CD8-positive, alpha-beta T cell (primary cell): ENCODE measurements at regions of chr20 and their contacts with region 1.

Region 1: DNA sequence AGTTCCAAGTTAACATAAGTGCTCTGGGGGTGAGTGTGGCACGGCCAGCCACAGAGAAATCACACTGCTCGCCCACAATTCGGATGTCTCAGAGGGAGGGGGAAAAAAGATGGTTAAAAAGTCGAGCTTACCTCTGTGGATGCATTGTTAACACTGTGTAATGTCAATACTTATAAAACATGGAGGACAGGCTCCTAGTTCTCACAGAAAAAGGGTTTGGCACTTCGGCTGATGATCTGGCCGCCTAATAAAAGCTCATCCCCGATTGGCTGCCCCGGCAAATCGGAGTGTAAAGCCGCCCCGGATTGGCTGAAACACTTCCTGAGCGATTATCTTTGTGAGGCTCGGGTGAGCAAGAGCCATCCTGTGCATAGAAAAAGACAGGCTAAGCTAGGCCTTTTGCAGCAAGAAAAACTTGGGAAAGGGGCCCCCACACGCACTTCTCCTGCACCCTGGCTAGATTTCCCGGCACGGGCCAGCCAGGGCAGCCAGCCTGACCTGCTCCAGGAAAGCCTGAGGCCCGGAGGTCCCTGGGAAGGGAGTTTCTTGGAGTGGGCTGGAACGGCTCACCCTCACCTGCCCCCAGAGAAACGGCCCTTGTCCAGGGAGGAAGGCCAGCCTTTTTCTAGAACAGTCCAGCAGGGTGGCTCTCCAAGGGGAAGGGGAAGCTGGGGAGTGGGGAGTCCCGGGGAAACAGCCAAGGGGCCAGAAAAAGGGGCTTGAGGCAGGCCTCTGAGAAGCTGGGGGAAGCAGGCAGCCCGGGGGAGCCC is at the start of gene ZMYND8:
- DNase-seq: peak; percentile 90 to 100 (median 95)
- ATAC-seq: peak; percentile 90
- H3K4me3 ChIP-seq: peak within 1 kb of the TSS; percentile 53 to 55
- H3K4me3 Mint-ChIP-seq: peak within 1 kb of the TSS; percentile 82
- H3K27ac ChIP-seq: peak within 1 kb of the TSS; percentile 75 to 76
- H3K27ac Mint-ChIP-seq: peak within 1 kb of the TSS; percentile 100
- H3K4me1 ChIP-seq: peaks cover 70% of the 10 kb centered on the region
- H3K4me1 Mint-ChIP-seq: peaks cover 38% of the 10 kb centered on the region
- H3K27me3 ChIP-seq: no peaks in the 10 kb centered on the region
- H3K27me3 Mint-ChIP-seq: no peaks in the 10 kb centered on the region
- CTCF ChIP-seq: no peak
- total RNA-seq, gene ZMYND8: 23.2 to 27.0 TPM

Region 2: GRCh38 chr20:47317127-47317895 is 39.4 kb before region 1 on chr20:
- CTCF ChIA-PET with region 1: no interaction called
- POLR2A ChIA-PET with region 1: no interaction called
- intact Hi-C with region 1: loop called in 1 of 2 experiments (anchors 5 kb)
- DNase-seq: peak in 8 of 9 experiments; percentile 33 to 63 (median 50)
- ATAC-seq: peak; percentile 77
- H3K4me3 ChIP-seq: no peak overlapping the region
- H3K4me3 Mint-ChIP-seq: no peak overlapping the region
- H3K27ac ChIP-seq: peak overlapping the region in 1 of 2 experiments; percentile 54
- H3K27ac Mint-ChIP-seq: peak overlapping the region; percentile 78
- H3K4me1 ChIP-seq: peaks cover 43% of the 10 kb centered on the region
- H3K4me1 Mint-ChIP-seq: peaks cover 67% of the 10 kb centered on the region
- H3K27me3 ChIP-seq: no peaks in the 10 kb centered on the region
- H3K27me3 Mint-ChIP-seq: no peaks in the 10 kb centered on the region
- CTCF ChIP-seq: no peak

Region 3: GRCh38 chr20:47535088-47535487 is 178.4 kb after region 1 on chr20:
- CTCF ChIA-PET with region 1: no interaction called
- POLR2A ChIA-PET with region 1: no interaction called
- intact Hi-C with region 1: no loop called
- DNase-seq: no peak
- ATAC-seq: no peak
- H3K4me3 ChIP-seq: no peak overlapping the region
- H3K4me3 Mint-ChIP-seq: no peak overlapping the region
- H3K27ac ChIP-seq: no peak overlapping the region
- H3K27ac Mint-ChIP-seq: no peak overlapping the region
- H3K4me1 ChIP-seq: peaks cover 25% of the 10 kb centered on the region
- H3K4me1 Mint-ChIP-seq: peaks cover 59% of the 10 kb centered on the region
- H3K27me3 ChIP-seq: no peaks in the 10 kb centered on the region
- H3K27me3 Mint-ChIP-seq: no peaks in the 10 kb centered on the region
- CTCF ChIP-seq: no peak

Region 4: DNA sequence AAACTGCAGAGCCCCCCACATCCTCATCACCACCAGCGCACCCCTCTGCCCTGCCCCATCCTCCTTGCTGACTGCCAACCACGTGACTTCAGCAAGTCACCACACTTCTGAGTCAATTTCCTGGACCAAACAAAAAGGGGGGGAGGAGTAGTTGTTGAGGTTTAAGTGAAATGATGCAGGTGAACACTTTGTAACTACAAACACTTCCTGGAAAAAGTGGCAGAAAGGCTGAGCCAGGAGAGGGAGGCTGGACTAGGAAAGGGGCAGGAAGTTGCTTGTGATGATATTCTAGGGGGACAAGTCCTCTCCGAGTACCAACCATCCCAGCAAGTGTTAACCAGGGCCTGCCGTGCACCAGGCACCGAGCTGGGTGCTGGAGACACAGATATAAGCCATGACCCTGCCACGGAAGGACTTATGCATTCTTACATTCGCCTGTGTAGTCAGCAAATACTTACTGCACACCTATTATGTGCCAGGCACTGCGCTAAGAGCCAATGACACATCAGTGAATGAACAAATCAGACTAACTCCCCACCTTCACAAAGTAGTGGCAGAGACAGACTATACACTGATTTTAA is 1403.8 kb after region 1 on chr20:
- CTCF ChIA-PET with region 1: no interaction called
- POLR2A ChIA-PET with region 1: no interaction called
- intact Hi-C with region 1: loop called in 1 of 2 experiments (anchors 5 kb)
- DNase-seq: peak; percentile 34 to 95 (median 82)
- ATAC-seq: peak; percentile 69
- H3K4me3 ChIP-seq: peak overlapping the region; percentile 36 to 51
- H3K4me3 Mint-ChIP-seq: peak overlapping the region; percentile 76
- H3K27ac ChIP-seq: peak overlapping the region; percentile 87 to 93
- H3K27ac Mint-ChIP-seq: peak overlapping the region; percentile 99
- H3K4me1 ChIP-seq: peaks cover 78% of the 10 kb centered on the region
- H3K4me1 Mint-ChIP-seq: peaks cover 86% of the 10 kb centered on the region
- H3K27me3 ChIP-seq: no peaks in the 10 kb centered on the region
- H3K27me3 Mint-ChIP-seq: no peaks in the 10 kb centered on the region
- CTCF ChIP-seq: no peak

Region 5: GRCh38 chr20:49046087-49046900 is 1689.6 kb after region 1 on chr20 and contains the start of gene CSE1L:
- CTCF ChIA-PET with region 1: no interaction called
- POLR2A ChIA-PET with region 1: no interaction called
- intact Hi-C with region 1: loop called in 1 of 2 experiments (anchors 10 kb)
- DNase-seq: peak; percentile 86 to 98 (median 95)
- ATAC-seq: peak; percentile 89
- H3K4me3 ChIP-seq: peak within 1 kb of the TSS; percentile 81 to 96
- H3K4me3 Mint-ChIP-seq: peak within 1 kb of the TSS; percentile 98
- H3K27ac ChIP-seq: peak within 1 kb of the TSS; percentile 85 to 90
- H3K27ac Mint-ChIP-seq: peak within 1 kb of the TSS; percentile 97
- H3K4me1 ChIP-seq: peaks cover 27% of the 10 kb centered on the region
- H3K4me1 Mint-ChIP-seq: peaks cover 34% of the 10 kb centered on the region
- H3K27me3 ChIP-seq: no peaks in the 10 kb centered on the region
- H3K27me3 Mint-ChIP-seq: no peaks in the 10 kb centered on the region
- CTCF ChIP-seq: no peak
- total RNA-seq, gene CSE1L: 31.8 to 33.4 TPM